Caco-2 (cell line): ENCODE measurements at regions of chr6 and their contacts with region 1.

Region 1: DNA sequence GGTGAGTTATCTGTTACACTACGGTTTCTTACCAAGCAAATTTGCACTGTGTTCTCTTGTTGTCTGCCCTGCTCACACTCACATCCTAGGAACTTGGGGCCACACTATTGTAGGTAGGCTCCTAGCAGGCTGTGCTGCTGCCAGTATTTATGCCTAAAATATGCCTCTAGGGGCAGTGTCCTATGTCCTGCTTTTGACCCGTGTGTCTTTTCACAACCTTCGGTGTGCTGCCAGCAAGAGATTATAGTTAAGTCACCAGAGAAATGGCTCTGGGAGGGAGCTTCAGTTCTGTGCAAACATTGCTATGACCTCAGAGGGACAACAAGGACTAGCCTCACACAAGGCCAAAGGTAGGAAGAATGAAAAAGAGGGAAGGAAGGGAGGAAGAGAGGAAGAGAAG is 8.9 kb upstream of the TAAR5 start:
- DNase-seq: peak; percentile 56 to 59
- H3K4me3 ChIP-seq: no peak overlapping the region
- H3K4me3 Mint-ChIP-seq: no peak overlapping the region
- H3K27ac Mint-ChIP-seq: no peak overlapping the region
- H3K4me1 ChIP-seq: peaks cover 6% of the 10 kb centered on the region; the same call in 1 of the 2 replicates
- H3K4me1 Mint-ChIP-seq: peaks cover 7% of the 10 kb centered on the region
- H3K27me3 ChIP-seq: no peaks in the 10 kb centered on the region
- H3K27me3 Mint-ChIP-seq: no peaks in the 10 kb centered on the region
- CTCF ChIP-seq: peak; percentile 35 to 38

Region 2: DNA sequence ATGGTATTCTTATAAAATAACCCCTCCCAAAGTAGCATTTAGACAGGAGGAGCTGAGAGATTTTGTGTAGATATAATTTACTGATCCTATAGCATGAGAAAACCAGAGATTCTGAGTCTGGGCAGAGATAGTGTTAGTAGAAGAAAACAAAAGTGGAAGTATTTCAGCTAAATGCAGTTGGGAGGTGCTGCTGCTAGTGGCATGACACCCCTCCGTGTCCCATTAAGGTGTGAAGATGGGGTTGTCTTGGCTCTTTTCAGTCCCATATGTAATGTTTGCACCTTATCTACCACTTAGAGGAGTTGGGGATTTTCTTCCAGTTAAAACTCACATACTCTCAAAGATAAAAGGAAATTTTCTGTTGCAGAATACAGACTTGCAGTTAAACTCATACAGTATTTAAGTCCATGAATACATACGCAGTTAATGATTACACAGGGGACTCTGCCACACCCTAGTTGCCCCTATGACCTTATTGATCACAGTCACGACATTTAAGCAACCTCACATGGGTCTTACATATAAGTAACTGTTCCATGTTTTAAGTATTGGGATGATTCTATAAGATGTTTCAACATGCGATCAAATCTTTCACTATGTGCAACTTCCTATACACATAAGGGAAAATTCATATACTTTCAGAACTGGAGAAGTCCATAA is 14.1 kb after region 1 on chr6:
- CTCF ChIA-PET with region 1: no interaction called
- POLR2A ChIA-PET with region 1: no interaction called
- intact Hi-C with region 1: loop called (anchors 1 kb)
- DNase-seq: peak; percentile 46 to 53
- H3K4me3 ChIP-seq: no peak overlapping the region
- H3K4me3 Mint-ChIP-seq: peak overlapping the region; percentile 48
- H3K27ac Mint-ChIP-seq: peak overlapping the region; percentile 40
- H3K4me1 ChIP-seq: peaks cover 37% of the 10 kb centered on the region
- H3K4me1 Mint-ChIP-seq: peaks cover 31% of the 10 kb centered on the region
- H3K27me3 ChIP-seq: no peaks in the 10 kb centered on the region
- H3K27me3 Mint-ChIP-seq: no peaks in the 10 kb centered on the region
- CTCF ChIP-seq: no peak